GM10248 (cell line): ENCODE measurements at regions of chr10 and their contacts with region 1.

Region 1: GRCh38 chr10:4849555-4850242 is 23.7 kb downstream of the AKR1E2 start:
- DNase-seq: peak; percentile 65
- CTCF ChIP-seq: peak; percentile 100

Region 2: GRCh38 chr10:4813023-4813422 is 36.7 kb before region 1 on chr10:
- CTCF ChIA-PET with region 1: interaction called, 13 read pairs
- POLR2A ChIA-PET with region 1: no interaction called
- DNase-seq: no peak
- CTCF ChIP-seq: no peak

Region 3: DNA sequence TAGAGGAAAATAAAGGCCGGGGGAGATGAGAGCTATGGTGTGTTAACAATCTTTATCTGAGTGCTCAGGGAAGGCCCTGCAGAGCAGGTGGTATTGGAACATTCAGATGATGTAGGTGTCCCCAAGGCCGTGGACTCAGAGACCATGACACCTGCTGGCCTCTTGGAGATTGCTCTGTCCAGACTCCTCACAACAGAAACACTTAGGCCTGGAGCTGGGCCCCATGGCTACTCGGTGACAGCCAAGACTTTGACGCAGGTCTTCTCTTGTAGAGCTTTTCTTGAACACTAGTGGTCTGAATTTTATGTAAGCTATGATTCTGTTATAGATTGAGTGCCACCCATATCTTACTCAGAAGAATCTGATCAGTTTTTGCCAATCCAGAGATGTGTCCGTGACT is 10.3 kb before region 1 on chr10:
- CTCF ChIA-PET with region 1: interaction called, 112 read pairs
- POLR2A ChIA-PET with region 1: no interaction called
- DNase-seq: no peak
- CTCF ChIP-seq: no peak

Region 4: DNA sequence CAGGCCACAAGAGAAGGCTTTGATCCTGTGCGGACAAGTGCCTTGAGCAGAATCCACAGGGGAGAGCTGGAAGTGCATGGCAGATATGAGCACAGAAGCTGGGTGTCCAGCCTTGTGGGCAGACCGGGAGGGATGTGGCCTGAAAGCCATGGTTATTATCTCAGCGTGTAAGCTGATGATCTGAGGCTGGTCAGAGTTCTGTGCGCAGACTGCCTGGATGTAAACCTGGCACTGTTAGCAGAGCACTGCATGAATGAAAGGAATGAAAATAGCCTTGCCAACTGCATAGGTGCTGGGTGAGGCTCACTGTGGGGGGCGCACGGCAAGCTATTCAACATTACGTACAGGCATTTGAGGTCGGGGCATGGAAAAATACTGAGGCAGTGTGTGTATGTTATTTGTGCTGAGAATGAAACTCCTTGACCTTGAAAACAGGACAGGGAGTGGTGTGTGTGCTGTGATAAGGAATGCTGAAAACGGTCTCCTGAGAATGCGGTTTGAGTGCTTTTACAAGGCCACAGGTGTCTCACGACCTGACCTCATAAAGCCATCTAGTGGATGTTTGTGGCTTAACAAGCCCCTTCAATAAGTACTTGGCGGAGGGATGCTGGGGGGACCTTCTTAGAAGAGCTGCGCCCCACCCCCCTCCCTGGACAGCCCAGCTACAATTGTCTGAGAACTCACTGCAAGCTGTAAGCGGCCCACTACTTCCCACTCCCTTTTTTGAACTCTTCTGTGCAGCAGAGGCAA is 132.2 kb after region 1 on chr10:
- CTCF ChIA-PET with region 1: interaction called, 52 read pairs
- POLR2A ChIA-PET with region 1: no interaction called
- DNase-seq: peak; percentile 20
- CTCF ChIP-seq: peak; percentile 53

Region 5: DNA sequence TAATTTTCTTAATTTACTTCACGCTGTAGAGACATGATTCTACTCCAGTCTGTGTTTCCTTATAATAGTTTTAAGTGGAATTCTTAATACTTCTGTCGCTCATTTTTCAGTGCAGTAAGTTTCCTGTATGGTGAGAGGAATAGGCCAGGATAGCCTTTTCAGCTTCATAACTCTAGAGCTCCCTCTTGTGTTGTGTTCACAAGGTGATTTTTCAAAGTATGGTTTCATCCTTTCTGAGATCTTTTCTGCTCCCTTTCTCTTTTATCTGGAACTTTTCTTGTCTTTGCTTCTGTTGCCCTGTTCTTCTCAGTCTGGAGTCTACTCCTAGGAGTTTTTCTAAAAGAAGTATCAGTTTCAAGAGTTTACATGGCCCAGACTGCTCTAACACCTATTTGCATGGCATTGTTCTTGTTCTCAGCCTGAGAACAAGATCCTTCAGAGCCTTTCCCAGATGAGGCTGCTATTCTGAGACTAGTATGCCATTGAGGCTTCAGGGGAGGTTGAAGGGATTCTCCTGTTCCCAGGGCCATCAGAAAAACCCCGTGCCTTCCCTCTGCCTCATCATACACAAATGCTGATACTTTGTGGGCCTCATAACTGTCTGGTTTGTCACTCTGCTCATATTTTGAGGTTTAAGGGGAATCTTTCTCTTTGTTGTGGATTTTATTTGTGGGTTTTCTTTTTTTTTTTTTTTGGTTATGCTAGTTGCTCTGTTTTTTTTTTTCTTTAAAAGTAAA is 584.5 kb after region 1 on chr10:
- CTCF ChIA-PET with region 1: interaction called, 61 read pairs
- POLR2A ChIA-PET with region 1: no interaction called
- DNase-seq: peak; percentile 31
- CTCF ChIP-seq: peak; percentile 66